Activated CD4-positive, alpha-beta memory T cell treated with anti-CD3 and anti-CD28 coated beads for 36 hours (primary cell): ENCODE measurements at regions of chr12 and their contacts with region 1.

Region 1: GRCh38 chr12:70242695-70243509 is at the start of gene CNOT2:
- DNase-seq: peak; percentile 94
- H3K4me3 Mint-ChIP-seq: peak within 1 kb of the TSS; percentile 99
- H3K27ac Mint-ChIP-seq: peak within 1 kb of the TSS; percentile 100
- H3K4me1 Mint-ChIP-seq: peaks cover 55% of the 10 kb centered on the region
- H3K27me3 Mint-ChIP-seq: no peaks in the 10 kb centered on the region
- total RNA-seq, gene CNOT2: 58.4 to 58.5 TPM

Region 2: DNA sequence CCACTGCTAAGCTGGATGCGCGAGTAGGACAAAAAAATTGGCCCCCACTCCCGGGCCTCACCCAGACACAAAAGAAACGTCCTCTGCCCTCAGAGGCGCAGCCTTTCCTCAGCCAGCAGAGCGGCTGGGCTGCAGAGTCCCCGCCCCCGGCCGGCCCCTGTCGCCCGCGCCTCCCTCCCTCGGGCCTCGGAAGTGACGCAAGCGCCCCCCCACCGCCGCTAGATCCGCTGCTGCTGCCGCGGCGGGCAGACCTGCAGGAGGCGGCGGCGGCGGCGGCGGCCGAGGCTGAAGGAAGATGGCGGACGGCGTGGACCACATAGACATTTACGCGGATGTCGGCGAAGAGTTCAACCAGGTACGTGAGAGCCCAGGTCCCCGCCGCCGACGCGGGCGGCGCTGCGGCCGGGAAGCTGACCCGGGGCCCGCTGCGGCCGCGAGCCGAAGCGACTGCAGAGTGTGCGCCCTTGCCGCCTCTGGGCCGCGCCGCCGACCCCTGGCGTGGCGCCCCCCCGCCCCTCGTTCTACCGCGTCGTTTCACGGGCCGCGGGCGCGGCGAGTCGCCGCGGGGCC is 1003.5 kb before region 1 on chr12 and contains the start of gene CPSF6:
- CTCF ChIA-PET with region 1: no interaction called
- POLR2A ChIA-PET with region 1: no interaction called
- intact Hi-C with region 1: loop called (anchors 2 kb)
- DNase-seq: peak; percentile 98
- H3K4me3 Mint-ChIP-seq: peak within 1 kb of the TSS; percentile 96
- H3K27ac Mint-ChIP-seq: peak within 1 kb of the TSS; percentile 99
- H3K4me1 Mint-ChIP-seq: peaks cover 46% of the 10 kb centered on the region
- H3K27me3 Mint-ChIP-seq: no peaks in the 10 kb centered on the region
- total RNA-seq, gene CPSF6: 86.6 to 90.0 TPM

Region 3: GRCh38 chr12:69738351-69739286 is 504.3 kb before region 1 on chr12 and contains the start of gene RAB3IP:
- CTCF ChIA-PET with region 1: no interaction called
- POLR2A ChIA-PET with region 1: no interaction called
- intact Hi-C with region 1: loop called (anchors 2 kb)
- DNase-seq: peak; percentile 95
- H3K4me3 Mint-ChIP-seq: peak within 1 kb of the TSS; percentile 90
- H3K27ac Mint-ChIP-seq: peak within 1 kb of the TSS; percentile 84
- H3K4me1 Mint-ChIP-seq: peaks cover 24% of the 10 kb centered on the region
- H3K27me3 Mint-ChIP-seq: peaks cover 1% of the 10 kb centered on the region
- total RNA-seq, gene RAB3IP: 30.3 to 34.0 TPM

Region 4: DNA sequence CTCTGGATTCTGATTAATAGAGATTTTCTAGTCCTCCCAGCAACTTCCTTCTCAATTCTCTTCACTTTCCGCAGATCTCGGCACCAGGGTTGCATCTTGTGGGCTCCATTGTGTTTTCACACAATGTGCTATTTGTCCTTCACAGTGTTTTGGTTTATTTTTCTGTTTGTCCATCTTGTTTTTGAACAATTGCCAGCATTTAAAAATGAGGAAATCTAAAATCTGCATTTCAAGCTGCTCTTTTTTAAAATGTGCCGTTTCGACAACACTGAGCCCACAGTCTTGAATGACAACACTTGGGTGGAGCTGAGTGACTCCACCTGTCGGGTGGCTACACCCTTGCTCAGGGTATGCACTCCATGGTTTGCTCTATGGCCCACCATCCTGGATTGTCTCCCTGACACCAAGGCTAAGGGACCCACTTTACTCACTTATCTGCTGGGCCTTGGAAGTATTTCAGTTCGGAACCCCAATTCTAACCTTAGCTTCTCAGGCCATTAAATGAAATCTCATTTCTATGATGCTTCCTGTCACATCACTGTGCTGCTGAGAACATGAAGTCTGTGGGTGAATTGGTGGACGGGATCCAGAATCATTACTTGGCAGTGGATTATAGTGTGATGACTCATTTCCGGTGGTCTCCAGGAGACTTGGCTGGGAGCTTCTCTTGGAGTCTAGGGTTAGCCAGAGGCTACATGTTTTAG is 421.3 kb before region 1 on chr12:
- CTCF ChIA-PET with region 1: no interaction called
- POLR2A ChIA-PET with region 1: no interaction called
- intact Hi-C with region 1: no loop called
- DNase-seq: no peak
- H3K4me3 Mint-ChIP-seq: no peak overlapping the region
- H3K27ac Mint-ChIP-seq: no peak overlapping the region
- H3K4me1 Mint-ChIP-seq: no peaks in the 10 kb centered on the region
- H3K27me3 Mint-ChIP-seq: peaks cover 1% of the 10 kb centered on the region

Region 5: DNA sequence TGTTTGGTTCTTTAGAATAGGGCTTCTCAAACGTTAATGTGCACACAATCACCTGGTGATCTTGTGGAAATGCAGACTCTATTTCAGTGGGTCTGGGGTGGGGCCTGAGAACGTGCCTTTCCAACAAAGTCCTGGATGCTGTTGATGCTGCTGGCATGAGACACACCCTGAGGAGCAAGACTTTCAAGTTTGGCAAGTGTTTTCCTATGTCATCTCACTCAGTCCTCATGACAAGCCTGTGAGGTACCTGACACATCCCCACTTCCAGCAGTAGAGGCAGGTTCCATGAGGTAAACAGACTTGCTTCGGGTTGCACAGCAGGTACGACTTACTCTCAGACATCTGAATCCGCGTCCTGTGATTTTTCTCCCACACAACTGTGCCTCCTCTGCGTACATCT is 270.8 kb before region 1 on chr12:
- CTCF ChIA-PET with region 1: no interaction called
- POLR2A ChIA-PET with region 1: no interaction called
- intact Hi-C with region 1: no loop called
- DNase-seq: no peak
- H3K4me3 Mint-ChIP-seq: no peak overlapping the region
- H3K27ac Mint-ChIP-seq: no peak overlapping the region
- H3K4me1 Mint-ChIP-seq: no peaks in the 10 kb centered on the region
- H3K27me3 Mint-ChIP-seq: peaks cover 5% of the 10 kb centered on the region

Region 6: DNA sequence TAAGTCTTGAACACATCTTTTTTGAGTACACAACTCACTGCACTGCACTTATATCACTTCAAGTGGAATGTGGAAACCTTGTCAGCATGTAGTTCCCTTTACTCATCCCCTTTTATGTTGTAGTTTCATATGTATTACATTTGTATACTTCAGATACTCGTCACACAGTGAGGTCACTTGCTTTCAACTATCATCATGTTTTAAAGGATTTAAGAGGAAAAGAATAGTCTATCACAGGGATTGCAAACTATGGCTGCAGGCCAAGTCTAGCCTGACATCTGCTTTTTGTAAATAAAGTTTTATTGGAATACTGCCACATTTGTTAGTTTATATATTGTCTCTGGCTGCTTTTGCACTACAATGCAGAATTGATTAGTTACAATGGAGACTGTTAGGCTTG is 24.6 kb after region 1 on chr12:
- CTCF ChIA-PET with region 1: no interaction called
- POLR2A ChIA-PET with region 1: no interaction called
- intact Hi-C with region 1: loop called (anchors 1 kb)
- DNase-seq: no peak
- H3K4me3 Mint-ChIP-seq: no peak overlapping the region
- H3K27ac Mint-ChIP-seq: peak overlapping the region; percentile 28
- H3K4me1 Mint-ChIP-seq: peaks cover 70% of the 10 kb centered on the region
- H3K27me3 Mint-ChIP-seq: no peaks in the 10 kb centered on the region

Region 7: GRCh38 chr12:70292017-70292776 is 49.3 kb after region 1 on chr12:
- CTCF ChIA-PET with region 1: no interaction called
- POLR2A ChIA-PET with region 1: no interaction called
- intact Hi-C with region 1: no loop called
- DNase-seq: no peak
- H3K4me3 Mint-ChIP-seq: no peak overlapping the region
- H3K27ac Mint-ChIP-seq: no peak overlapping the region
- H3K4me1 Mint-ChIP-seq: peaks cover 45% of the 10 kb centered on the region
- H3K27me3 Mint-ChIP-seq: no peaks in the 10 kb centered on the region

Region 8: DNA sequence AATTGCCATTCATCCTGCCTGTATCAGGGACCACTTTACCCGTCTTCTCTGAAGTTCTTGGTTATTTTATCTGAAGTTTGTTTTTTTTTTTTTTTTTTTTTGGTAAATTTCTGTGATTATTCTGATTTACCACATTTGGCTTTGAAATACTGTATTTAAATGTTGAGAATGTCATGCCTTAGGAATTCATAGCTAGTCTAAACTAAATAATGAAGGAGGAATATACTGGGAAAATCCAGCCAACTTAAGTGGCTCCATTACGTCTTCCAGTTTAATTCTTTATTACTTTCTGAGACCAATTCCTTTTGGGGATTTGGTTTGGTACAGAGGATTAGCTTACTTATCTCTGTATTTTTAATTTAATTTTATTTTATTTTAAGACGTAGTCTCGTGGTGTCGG is 62.9 kb after region 1 on chr12:
- CTCF ChIA-PET with region 1: no interaction called
- POLR2A ChIA-PET with region 1: no interaction called
- intact Hi-C with region 1: loop called (anchors 5 kb)
- DNase-seq: no peak
- H3K4me3 Mint-ChIP-seq: no peak overlapping the region
- H3K27ac Mint-ChIP-seq: no peak overlapping the region
- H3K4me1 Mint-ChIP-seq: peaks cover 38% of the 10 kb centered on the region
- H3K27me3 Mint-ChIP-seq: no peaks in the 10 kb centered on the region

Region 9: GRCh38 chr12:70365648-70366518 is 123.0 kb after region 1 on chr12 and contains the start of gene KCNMB4:
- CTCF ChIA-PET with region 1: interaction called, 4 read pairs
- POLR2A ChIA-PET with region 1: interaction called, 3 read pairs
- intact Hi-C with region 1: loop called (anchors 1 kb)
- DNase-seq: peak; percentile 83
- H3K4me3 Mint-ChIP-seq: peak within 1 kb of the TSS; percentile 90
- H3K27ac Mint-ChIP-seq: peak within 1 kb of the TSS; percentile 51
- H3K4me1 Mint-ChIP-seq: peaks cover 18% of the 10 kb centered on the region
- H3K27me3 Mint-ChIP-seq: peaks cover 5% of the 10 kb centered on the region
- total RNA-seq, gene KCNMB4: 1.3 to 1.5 TPM

Region 10: DNA sequence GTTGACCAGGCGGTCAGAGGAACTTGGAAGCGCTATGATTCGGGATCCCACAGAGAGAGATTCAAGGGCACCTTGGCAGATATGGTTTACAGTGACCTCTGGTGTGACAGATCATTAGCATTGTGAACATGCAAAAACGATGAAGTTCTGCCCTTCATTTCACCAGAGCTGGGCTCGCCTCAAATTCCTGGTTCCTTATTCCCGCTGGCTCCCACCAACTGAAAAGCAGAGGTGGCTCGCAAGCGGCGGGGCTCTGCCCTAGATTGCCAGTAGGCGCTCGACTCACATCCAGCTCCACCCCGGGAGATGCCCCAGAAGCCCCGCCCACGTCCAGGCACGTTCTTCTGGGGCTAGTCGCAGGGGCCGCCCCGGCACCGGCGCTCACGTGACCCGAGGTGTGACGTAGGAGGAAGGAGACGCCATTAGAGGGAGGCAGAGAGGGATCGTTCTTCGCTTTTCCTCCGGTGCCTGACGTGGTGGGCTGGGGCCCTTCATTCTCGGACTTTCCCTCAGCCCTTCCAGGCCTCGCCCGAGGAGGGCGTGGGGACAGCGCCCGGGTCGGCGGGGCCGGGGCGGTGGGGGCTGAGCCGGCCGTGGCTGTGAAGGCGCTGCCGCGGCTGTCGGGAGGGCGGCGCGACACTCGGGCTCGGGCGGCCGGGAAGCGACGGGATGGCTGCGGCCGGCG is 1511.7 kb after region 1 on chr12 and contains the start of gene RAB21:
- CTCF ChIA-PET with region 1: no interaction called
- POLR2A ChIA-PET with region 1: no interaction called
- intact Hi-C with region 1: loop called (anchors 10 kb)
- DNase-seq: peak; percentile 99
- H3K4me3 Mint-ChIP-seq: peak within 1 kb of the TSS; percentile 95
- H3K27ac Mint-ChIP-seq: peak within 1 kb of the TSS; percentile 98
- H3K4me1 Mint-ChIP-seq: peaks cover 35% of the 10 kb centered on the region
- H3K27me3 Mint-ChIP-seq: peaks cover 1% of the 10 kb centered on the region
- total RNA-seq, gene RAB21: 72.7 to 76.8 TPM